ENCODE measurements at regions of chr17 and their contacts with region 1.

Region 1: DNA sequence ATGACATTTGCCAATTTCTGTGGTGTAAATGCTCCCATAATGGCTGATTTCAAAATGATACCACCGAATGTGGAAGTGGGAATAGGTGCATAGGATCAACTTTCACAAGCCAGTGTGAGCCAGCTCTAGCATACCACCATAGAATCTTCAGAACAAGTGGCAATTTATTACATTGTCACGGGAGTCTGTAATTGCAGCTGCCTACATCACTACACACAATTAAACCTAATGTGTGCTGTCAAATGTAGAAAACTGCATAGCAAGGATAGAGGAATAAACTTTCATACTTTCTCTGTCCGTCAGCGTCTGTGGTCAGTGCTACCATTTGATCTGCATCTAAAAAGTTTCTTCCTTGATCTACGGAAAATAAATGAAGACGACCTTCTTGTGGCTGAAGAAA is 417.8 kb upstream of the TOM1L1 start:
- DNase-seq: no peak
- H3K4me3 ChIP-seq: no peak overlapping the region
- H3K27ac ChIP-seq: no peak overlapping the region
- H3K4me1 ChIP-seq: no peaks in the 10 kb centered on the region
- H3K27me3 ChIP-seq: no peaks in the 10 kb centered on the region
- CTCF ChIP-seq: no peak

Region 2: DNA sequence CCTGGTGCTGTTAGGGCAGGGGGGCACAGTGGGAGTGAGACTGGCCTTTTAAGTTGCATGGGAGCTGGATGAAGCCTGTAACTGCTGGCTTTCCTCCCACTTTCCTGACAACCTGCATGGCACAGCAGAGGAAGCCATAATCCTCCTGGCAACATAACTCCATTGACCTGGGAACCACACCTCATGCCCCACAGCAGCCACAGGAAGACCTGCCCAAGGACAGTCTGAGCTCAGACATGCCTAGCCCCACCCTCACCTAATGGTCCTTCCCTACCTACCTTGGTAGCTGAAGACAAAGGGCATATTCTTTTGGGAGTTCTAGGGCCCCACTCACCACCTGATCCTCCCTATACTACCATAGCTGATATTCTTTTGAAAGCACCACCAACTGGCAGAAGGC is 64.4 kb before region 1 on chr17:
- intact Hi-C with region 1: loop called (anchors 10 kb)
- DNase-seq: no peak
- H3K4me3 ChIP-seq: no peak overlapping the region
- H3K27ac ChIP-seq: no peak overlapping the region
- H3K4me1 ChIP-seq: no peaks in the 10 kb centered on the region
- H3K27me3 ChIP-seq: no peaks in the 10 kb centered on the region
- CTCF ChIP-seq: no peak

Measured in left ventricle myocardium inferior (tissue), 1 donor.